ENCODE measurements at regions of chr11 and their contacts with region 1.

Region 1: DNA sequence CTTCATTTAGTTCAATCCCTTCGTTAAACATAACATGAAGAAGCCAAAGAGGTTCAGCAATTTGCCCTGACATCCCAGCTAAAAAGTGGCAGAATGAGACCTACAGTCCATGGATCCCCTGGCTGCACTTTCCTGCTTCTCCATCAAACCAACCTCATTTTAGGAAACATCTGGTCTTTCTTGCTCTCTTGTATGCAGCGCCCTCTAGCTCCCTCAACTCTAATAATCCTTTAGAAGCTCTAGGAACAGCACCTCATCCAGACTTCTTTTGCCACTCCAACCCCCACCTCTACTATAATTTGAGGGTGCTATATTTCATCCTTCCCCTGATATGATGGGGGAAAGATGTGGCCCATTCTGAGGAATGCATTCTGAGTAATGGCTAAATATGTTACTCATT is 7.4 kb downstream of the CNTF start:
- DNase-seq: peak; percentile 58
- CTCF ChIP-seq: peak; percentile 69

Region 2: GRCh38 chr11:58358969-58359368 is 270.9 kb before region 1 on chr11 and contains the start of gene OR5B17:
- CTCF ChIA-PET with region 1: no interaction called
- POLR2A ChIA-PET with region 1: no interaction called
- DNase-seq: no peak
- CTCF ChIP-seq: no peak

Region 3: DNA sequence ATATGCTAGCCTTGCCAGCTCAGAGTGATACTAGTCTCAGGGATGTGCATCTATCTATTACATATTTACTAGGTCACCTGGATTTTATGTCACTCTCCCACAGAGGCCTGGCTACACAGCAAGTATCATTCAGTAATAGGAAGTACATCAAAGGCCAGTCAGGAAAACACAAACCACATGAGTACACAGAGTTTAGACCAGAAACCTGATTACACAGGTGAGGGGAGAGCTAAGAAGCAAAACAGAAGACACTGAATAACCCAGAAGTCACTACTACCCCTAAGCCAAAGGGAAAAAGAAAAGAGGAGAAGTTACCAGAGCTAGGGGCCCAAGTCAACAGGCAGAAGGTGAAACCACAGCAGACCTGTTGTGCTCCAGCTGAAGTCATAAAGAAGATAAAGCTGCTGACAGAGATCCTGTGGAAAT is 67.5 kb before region 1 on chr11:
- CTCF ChIA-PET with region 1: interaction called, 49 read pairs
- POLR2A ChIA-PET with region 1: no interaction called
- DNase-seq: peak; percentile 17
- CTCF ChIP-seq: no peak

Region 4: DNA sequence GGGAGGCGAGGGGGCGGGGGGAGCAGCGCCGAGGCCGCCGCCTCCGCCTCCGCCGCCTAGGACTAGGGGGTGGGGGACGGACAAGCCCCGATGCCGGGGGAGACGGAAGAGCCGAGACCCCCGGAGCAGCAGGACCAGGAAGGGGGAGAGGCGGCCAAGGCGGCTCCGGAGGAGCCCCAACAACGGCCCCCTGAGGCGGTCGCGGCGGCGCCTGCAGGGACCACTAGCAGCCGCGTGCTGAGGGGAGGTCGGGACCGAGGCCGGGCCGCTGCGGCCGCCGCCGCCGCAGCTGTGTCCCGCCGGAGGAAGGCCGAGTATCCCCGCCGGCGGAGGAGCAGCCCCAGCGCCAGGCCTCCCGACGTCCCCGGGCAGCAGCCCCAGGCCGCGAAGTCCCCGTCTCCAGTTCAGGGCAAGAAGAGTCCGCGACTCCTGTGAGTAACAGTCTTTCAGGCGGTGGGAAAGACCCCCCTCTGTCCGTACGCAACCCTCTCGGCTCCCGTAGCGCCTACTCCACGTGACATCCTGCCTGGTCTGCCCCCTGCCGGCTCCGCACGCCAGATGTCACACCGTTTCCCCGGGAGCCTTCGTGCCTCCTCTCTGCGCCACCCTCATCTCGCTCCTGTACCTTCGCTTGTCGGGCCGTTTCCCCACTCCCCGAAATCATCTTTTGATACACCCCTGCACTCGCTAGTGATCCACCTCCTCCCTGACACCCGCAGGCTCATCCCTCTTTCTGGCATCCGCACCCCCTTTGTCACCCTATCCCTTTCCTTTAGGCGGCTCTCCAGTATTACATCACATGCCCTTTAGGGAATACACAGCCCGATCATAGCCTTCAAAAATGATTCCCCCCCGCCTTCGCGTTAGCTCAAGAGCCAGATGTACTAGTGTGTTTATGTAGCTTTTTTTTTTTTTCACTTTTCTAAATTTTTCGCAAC is 50.4 kb before region 1 on chr11:
- CTCF ChIA-PET with region 1: interaction called, 20 read pairs
- POLR2A ChIA-PET with region 1: no interaction called
- DNase-seq: peak; percentile 77
- CTCF ChIP-seq: peak; percentile 91

Region 5: GRCh38 chr11:58609723-58610122 is 20.1 kb before region 1 on chr11:
- CTCF ChIA-PET with region 1: interaction called, 36 read pairs
- POLR2A ChIA-PET with region 1: interaction called, 3 read pairs
- DNase-seq: no peak
- CTCF ChIP-seq: no peak

Region 6: GRCh38 chr11:58640386-58641023 is 10.6 kb after region 1 on chr11:
- CTCF ChIA-PET with region 1: interaction called, 93 read pairs
- POLR2A ChIA-PET with region 1: interaction called, 3 read pairs
- DNase-seq: no peak
- CTCF ChIP-seq: no peak

Region 7: DNA sequence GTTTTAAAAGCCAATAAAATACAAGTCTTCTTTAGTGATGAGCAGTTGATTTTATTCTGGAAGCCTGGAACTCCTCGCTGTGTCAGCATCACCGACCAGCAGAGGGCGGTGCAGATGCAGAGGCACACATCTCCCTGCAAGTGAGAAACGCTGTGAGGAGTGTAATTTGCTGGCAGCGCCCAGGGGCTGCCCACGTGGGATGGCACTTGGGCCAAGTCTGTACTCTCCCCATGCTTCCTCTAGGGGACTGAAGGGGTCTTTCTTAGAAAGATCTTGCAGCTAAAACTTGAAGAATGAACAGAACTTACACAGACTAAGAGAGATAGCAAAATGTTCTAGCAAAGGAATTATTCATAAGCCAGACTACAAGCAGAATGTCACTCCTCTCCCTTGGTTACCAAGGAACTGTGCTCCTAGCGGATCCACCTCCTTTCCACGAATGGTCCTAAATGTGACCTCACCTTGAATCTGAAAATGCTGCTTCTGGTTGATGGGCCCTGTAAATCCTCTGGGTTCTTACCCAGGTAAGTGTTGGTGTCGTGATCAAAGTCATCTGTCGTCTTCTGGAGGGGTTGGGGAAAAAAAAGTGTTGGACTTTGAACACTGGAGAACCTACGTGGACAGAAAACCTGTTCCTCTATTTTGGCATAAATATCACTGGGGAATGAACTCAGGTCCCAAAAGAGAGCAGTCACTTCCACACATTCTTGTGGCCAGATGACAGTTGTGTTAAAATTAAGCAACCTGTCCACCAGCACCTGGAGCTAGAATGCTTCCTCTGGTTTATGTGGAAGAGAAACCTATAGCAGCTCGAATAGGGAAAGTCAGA is 24.4 kb after region 1 on chr11:
- CTCF ChIA-PET with region 1: interaction called, 19 read pairs
- POLR2A ChIA-PET with region 1: no interaction called
- DNase-seq: peak; percentile 69
- CTCF ChIP-seq: peak; percentile 93

Region 8: GRCh38 chr11:59355226-59355625 is 725.4 kb after region 1 on chr11:
- CTCF ChIA-PET with region 1: no interaction called
- POLR2A ChIA-PET with region 1: no interaction called
- DNase-seq: no peak
- CTCF ChIP-seq: no peak

Measured in GM10248 (cell line).